ENCODE measurements at regions of chr5 and their contacts with region 1.

Region 1: GRCh38 chr5:128844354-128844923 is 120.8 kb upstream of the SLC27A6 start:
- DNase-seq: no peak
- H3K4me3 ChIP-seq: no peak overlapping the region
- H3K27ac ChIP-seq: no peak overlapping the region
- H3K4me1 ChIP-seq: no peaks in the 10 kb centered on the region
- H3K27me3 ChIP-seq: peaks cover 2% of the 10 kb centered on the region
- CTCF ChIP-seq: peak; percentile 30 to 35

Region 2: GRCh38 chr5:127757576-127757975 is 1086.9 kb before region 1 on chr5:
- CTCF ChIA-PET with region 1: no interaction called
- dilution Hi-C with region 1: no loop called
- in situ Hi-C with region 1: no loop called
- intact Hi-C with region 1: loop called (anchors 10 kb)
- DNase-seq: peak; percentile 53
- H3K4me3 ChIP-seq: no peak overlapping the region
- H3K27ac ChIP-seq: no peak overlapping the region
- H3K4me1 ChIP-seq: no peaks in the 10 kb centered on the region
- H3K27me3 ChIP-seq: peaks cover 2% of the 10 kb centered on the region
- CTCF ChIP-seq: peak; percentile 43 to 73

Region 3: DNA sequence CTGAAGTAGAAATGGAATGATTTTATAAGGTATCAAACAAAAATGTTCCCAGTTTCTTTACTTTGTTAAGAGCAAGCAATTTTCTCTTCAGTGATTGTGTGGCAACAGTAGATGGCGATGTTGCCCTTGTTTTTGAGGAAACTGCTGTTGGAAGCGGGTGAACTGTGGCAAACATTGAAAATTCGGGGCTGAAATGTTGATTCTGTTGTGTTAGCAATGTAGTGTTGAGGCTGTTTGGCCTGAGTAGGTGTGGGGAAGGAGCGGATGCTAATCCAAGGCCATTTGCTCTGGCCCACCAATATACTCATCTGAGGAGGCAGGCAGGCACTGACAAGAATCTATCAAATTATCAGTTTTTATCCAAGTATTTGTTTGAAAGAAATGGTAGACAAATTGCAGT is 631.1 kb before region 1 on chr5:
- CTCF ChIA-PET with region 1: no interaction called
- dilution Hi-C with region 1: loop called (anchors 25 kb)
- in situ Hi-C with region 1: loop called in 1 of 2 experiments (anchors 25 kb)
- intact Hi-C with region 1: loop called (anchors 1 kb)
- DNase-seq: peak; percentile 46
- H3K4me3 ChIP-seq: no peak overlapping the region
- H3K27ac ChIP-seq: no peak overlapping the region
- H3K4me1 ChIP-seq: peaks cover 8% of the 10 kb centered on the region
- H3K27me3 ChIP-seq: no peaks in the 10 kb centered on the region
- CTCF ChIP-seq: peak; percentile 74 to 78

Region 4: GRCh38 chr5:128538250-128539037 is 306.0 kb before region 1 on chr5:
- CTCF ChIA-PET with region 1: no interaction called
- dilution Hi-C with region 1: no loop called
- in situ Hi-C with region 1: no loop called
- intact Hi-C with region 1: loop called (anchors 2 kb)
- DNase-seq: peak; percentile 80
- H3K4me3 ChIP-seq: peak overlapping the region; percentile 72 to 97 (median 92)
- H3K27ac ChIP-seq: peak overlapping the region; percentile 42
- H3K4me1 ChIP-seq: peaks cover 18% of the 10 kb centered on the region
- H3K27me3 ChIP-seq: no peaks in the 10 kb centered on the region
- CTCF ChIP-seq: no peak

Measured in mammary epithelial cell (primary cell).